GM10248 (cell line): ENCODE measurements at regions of chr16 and their contacts with region 1.

Region 1: DNA sequence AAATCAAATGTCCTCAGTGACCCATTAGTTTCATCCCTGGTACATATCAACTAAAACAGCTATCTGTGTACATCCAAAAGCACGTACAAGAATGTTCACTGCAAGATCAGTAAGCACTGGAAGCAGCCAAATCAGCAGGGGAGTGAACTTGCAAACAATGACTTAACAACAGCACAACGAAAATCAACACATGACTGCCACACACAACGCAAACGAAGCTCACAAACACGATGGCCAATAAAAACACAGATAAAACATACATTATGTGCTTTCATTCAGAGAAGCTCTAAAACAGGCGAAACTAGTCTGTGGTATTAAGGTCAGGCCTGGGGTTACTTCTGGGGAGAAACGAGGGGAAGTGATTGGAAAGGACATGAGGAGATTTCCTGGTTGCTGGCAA is 60.6 kb downstream of the XPO6 start:
- DNase-seq: no peak
- CTCF ChIP-seq: no peak

Region 2: DNA sequence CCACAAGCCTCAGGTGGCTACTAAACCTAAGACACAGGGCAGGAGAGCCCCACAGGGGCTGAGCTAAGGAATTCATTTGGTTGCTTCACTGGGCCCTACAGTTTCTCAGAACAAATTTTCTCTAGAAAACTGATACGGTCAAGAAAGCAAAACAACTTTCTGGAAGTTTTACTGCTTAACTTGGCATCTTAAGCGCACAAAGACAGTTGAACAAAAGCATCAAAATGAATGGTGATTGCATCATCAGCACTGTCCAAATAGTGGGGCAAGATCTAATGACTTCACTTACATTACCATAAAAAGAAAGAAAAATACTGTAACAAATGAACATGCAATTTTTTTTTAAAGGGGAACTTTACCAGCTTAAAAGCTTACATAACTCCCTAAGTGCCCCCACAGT is 12.9 kb after region 1 on chr16:
- CTCF ChIA-PET with region 1: interaction called, 11 read pairs
- POLR2A ChIA-PET with region 1: no interaction called
- DNase-seq: no peak
- CTCF ChIP-seq: no peak